B cell (primary cell): ENCODE measurements at regions of chr6 and their contacts with region 1.

Region 1: DNA sequence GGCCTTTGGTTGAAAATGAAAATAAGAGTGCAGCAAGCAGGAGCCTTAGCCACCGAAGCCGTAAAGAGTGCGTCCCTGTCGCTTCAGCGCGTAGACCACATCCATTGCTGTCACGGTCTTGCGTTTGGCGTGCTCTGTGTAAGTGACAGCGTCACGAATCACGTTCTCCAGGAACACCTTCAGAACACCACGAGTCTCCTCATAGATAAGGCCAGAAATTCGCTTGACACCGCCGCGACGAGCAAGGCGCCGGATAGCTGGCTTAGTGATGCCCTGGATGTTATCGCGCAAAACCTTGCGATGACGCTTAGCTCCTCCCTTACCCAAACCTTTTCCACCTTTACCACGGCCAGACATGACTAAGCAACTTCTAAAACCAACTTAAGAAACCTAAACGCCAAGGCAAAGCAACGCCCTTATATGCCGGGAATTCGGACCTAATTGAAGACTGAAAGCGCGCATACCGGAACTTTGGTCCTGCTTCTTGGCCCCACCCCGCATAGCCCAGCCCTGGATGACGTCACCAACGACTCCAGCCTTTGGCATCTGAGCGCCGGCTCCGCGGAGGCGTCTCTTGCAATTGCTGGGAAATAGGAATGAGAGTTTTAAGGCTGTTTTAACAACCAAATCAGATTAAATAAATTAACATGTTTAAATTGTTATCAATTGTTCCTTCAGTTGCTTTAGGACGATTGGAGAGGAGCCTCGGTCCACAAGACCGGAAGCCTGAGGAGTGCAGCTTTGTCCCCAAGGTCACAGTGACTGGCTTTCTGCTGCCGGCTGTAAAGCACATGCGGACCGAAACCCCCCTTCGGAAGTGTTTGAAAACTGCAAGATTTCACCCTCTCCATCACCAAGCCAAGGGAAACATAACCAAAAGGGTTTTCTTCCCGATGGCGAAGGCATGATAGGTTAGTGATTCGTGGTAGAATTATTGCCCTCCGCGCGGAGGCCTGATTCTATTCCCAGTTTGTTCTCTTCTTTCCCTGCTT is 79.6 kb upstream of the BTN3A2 start:
- DNase-seq: peak; percentile 99
- ATAC-seq: peak; percentile 76
- H3K4me3 ChIP-seq: peak overlapping the region; percentile 52 to 99 (median 71)
- H3K4me3 Mint-ChIP-seq: peak overlapping the region; percentile 90
- H3K27ac ChIP-seq: peak overlapping the region; percentile 93 to 97
- H3K27ac Mint-ChIP-seq: peak overlapping the region; percentile 95
- H3K4me1 ChIP-seq: peaks cover 17 to 18% of the 10 kb centered on the region in 2 donors
- H3K4me1 Mint-ChIP-seq: peaks cover 33% of the 10 kb centered on the region
- H3K27me3 ChIP-seq: no peaks in the 10 kb centered on the region
- H3K27me3 Mint-ChIP-seq: peaks cover 3% of the 10 kb centered on the region
- CTCF ChIP-seq: no peak

Region 2: GRCh38 chr6:25942561-25943147 is 342.8 kb before region 1 on chr6:
- CTCF ChIA-PET with region 1: no interaction called
- POLR2A ChIA-PET with region 1: no interaction called
- intact Hi-C with region 1: no loop called
- DNase-seq: peak; percentile 65
- ATAC-seq: peak; percentile 47
- H3K4me3 ChIP-seq: no peak overlapping the region
- H3K4me3 Mint-ChIP-seq: no peak overlapping the region
- H3K27ac ChIP-seq: no peak overlapping the region
- H3K27ac Mint-ChIP-seq: no peak overlapping the region
- H3K4me1 ChIP-seq: no peaks in the 10 kb centered on the region
- H3K4me1 Mint-ChIP-seq: peaks cover 10% of the 10 kb centered on the region
- H3K27me3 ChIP-seq: no peaks in the 10 kb centered on the region
- H3K27me3 Mint-ChIP-seq: peaks cover 4% of the 10 kb centered on the region
- CTCF ChIP-seq: peak; percentile 70

Region 3: GRCh38 chr6:26204332-26205165 is 80.9 kb before region 1 on chr6:
- CTCF ChIA-PET with region 1: interaction called, 14 read pairs
- POLR2A ChIA-PET with region 1: interaction called, 47 read pairs
- intact Hi-C with region 1: loop called (anchors 1 kb)
- DNase-seq: peak; percentile 96
- ATAC-seq: peak; percentile 65
- H3K4me3 ChIP-seq: peak overlapping the region; percentile 76 to 94 (median 81)
- H3K4me3 Mint-ChIP-seq: no peak overlapping the region
- H3K27ac ChIP-seq: peak overlapping the region; percentile 88 to 96
- H3K27ac Mint-ChIP-seq: no peak overlapping the region
- H3K4me1 ChIP-seq: peaks cover 26 to 38% of the 10 kb centered on the region in 2 donors
- H3K4me1 Mint-ChIP-seq: peaks cover 30% of the 10 kb centered on the region
- H3K27me3 ChIP-seq: no peaks in the 10 kb centered on the region
- H3K27me3 Mint-ChIP-seq: no peaks in the 10 kb centered on the region
- CTCF ChIP-seq: no peak

Region 4: DNA sequence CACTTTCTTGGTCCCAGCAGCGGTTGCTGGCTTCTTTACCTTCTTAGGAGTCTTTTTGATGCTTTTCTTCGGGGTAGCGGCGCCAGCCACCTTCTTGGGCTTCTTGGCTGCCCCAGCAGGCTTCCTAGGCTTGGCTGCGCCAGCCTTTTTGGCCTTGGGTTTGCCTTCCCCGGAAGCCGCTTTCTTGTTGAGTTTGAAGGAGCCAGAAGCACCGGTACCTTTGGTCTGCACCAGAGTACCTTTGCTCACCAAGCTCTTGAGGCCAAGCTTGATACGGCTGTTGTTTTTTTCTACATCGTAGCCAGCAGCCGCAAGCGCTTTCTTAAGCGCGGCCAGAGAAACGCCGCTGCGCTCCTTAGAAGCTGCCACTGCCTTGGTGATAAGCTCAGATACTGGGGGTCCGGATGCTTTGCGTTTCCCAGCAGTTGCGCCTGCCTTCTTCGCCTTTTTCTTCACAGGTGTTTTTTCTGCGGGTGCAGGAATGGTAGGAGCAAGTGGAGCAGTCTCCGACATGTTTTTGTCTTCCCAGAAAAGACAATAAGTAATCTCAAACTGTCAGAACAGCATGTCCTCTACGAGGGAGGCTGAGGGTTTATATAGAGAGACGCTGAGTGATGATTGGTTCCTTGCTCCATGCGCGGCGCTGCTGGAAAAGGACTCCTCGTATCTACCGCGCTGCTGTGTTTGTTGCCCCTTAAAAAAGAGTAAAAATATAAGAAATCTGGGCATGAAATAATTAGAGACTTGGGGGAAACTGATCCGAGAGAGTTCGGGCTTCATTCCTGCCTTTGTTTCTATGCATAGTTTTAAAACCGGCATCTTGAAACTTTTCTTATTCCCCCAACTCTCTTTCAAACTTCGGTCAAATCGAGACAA is 50.8 kb before region 1 on chr6:
- CTCF ChIA-PET with region 1: no interaction called
- POLR2A ChIA-PET with region 1: interaction called, 17 read pairs
- intact Hi-C with region 1: no loop called
- DNase-seq: peak; percentile 87
- ATAC-seq: peak; percentile 76
- H3K4me3 ChIP-seq: peak overlapping the region; percentile 70 to 99 (median 85)
- H3K4me3 Mint-ChIP-seq: peak overlapping the region; percentile 93
- H3K27ac ChIP-seq: peak overlapping the region; percentile 86 to 90
- H3K27ac Mint-ChIP-seq: peak overlapping the region; percentile 95
- H3K4me1 ChIP-seq: peaks cover 13 to 21% of the 10 kb centered on the region in 2 donors
- H3K4me1 Mint-ChIP-seq: peaks cover 23% of the 10 kb centered on the region
- H3K27me3 ChIP-seq: no peaks in the 10 kb centered on the region
- H3K27me3 Mint-ChIP-seq: no peaks in the 10 kb centered on the region
- CTCF ChIP-seq: no peak

Region 5: GRCh38 chr6:26249957-26250697 is 35.3 kb before region 1 on chr6:
- CTCF ChIA-PET with region 1: interaction called, 6 read pairs
- POLR2A ChIA-PET with region 1: interaction called, 29 read pairs
- intact Hi-C with region 1: loop called (anchors 1 kb)
- DNase-seq: peak; percentile 88
- ATAC-seq: peak; percentile 67
- H3K4me3 ChIP-seq: peak overlapping the region; percentile 68 to 90 (median 83)
- H3K4me3 Mint-ChIP-seq: peak overlapping the region; percentile 97
- H3K27ac ChIP-seq: peak overlapping the region; percentile 73 to 74
- H3K27ac Mint-ChIP-seq: peak overlapping the region; percentile 97
- H3K4me1 ChIP-seq: peaks cover 8 to 16% of the 10 kb centered on the region in 2 donors
- H3K4me1 Mint-ChIP-seq: peaks cover 43% of the 10 kb centered on the region
- H3K27me3 ChIP-seq: no peaks in the 10 kb centered on the region
- H3K27me3 Mint-ChIP-seq: no peaks in the 10 kb centered on the region
- CTCF ChIP-seq: peak; percentile 70

Region 6: GRCh38 chr6:26312501-26313390 is 27.3 kb after region 1 on chr6:
- CTCF ChIA-PET with region 1: no interaction called
- POLR2A ChIA-PET with region 1: interaction called, 3 read pairs
- intact Hi-C with region 1: loop called (anchors 1 kb)
- DNase-seq: peak; percentile 90
- ATAC-seq: peak; percentile 75
- H3K4me3 ChIP-seq: peak overlapping the region; percentile 64 to 100 (median 77)
- H3K4me3 Mint-ChIP-seq: peak overlapping the region; percentile 93
- H3K27ac ChIP-seq: peak overlapping the region in 1 of 2 donors; percentile 56
- H3K27ac Mint-ChIP-seq: peak overlapping the region; percentile 92
- H3K4me1 ChIP-seq: peaks cover 15 to 23% of the 10 kb centered on the region in 2 donors
- H3K4me1 Mint-ChIP-seq: peaks cover 32% of the 10 kb centered on the region
- H3K27me3 ChIP-seq: no peaks in the 10 kb centered on the region
- H3K27me3 Mint-ChIP-seq: peaks cover 4% of the 10 kb centered on the region
- CTCF ChIP-seq: no peak

Region 7: DNA sequence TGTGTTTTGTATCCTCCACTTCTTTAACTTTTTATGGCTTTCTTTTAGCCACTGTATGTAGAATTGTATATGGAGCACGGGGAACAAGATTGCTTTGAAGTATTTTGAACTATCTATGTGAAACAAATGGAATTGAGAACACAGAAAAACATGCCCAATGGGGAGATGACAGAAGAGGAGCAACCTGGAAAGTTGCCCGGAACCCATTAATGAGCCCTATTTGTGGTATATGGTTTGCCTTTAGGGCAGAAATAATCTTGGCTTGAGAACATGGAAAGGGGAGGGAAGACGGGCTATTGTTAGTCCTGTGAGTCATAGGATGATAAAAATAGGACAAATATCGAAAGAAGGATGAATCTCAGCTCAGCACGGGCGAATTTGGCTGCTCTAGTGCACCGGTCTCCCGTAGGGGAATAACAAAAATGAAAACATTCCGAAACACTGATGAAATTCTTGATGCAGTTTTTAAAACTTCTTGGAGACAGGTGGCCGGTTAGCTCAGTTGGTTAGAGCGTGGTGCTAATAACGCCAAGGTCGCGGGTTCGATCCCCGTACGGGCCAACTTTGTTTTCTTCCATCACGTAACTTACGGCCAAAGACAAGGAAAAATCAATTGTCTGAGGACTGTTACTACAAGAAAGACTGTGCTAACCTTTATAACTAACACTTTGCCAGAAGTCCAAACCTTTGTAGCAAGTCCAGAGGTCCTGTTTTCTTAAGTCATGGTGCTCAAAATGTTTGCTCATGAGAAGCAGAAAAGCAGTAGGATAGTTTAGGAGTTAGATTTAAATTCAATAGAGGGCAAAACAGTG is 268.4 kb after region 1 on chr6:
- CTCF ChIA-PET with region 1: no interaction called
- POLR2A ChIA-PET with region 1: interaction called, 6 read pairs
- intact Hi-C with region 1: loop called (anchors 1 kb)
- DNase-seq: peak; percentile 92
- ATAC-seq: peak; percentile 42
- H3K4me3 ChIP-seq: peak overlapping the region; percentile 59 to 90 (median 74)
- H3K4me3 Mint-ChIP-seq: no peak overlapping the region
- H3K27ac ChIP-seq: peak overlapping the region; percentile 26 to 62
- H3K27ac Mint-ChIP-seq: no peak overlapping the region
- H3K4me1 ChIP-seq: peaks cover 15 to 45% of the 10 kb centered on the region in 2 donors
- H3K4me1 Mint-ChIP-seq: peaks cover 22% of the 10 kb centered on the region
- H3K27me3 ChIP-seq: no peaks in the 10 kb centered on the region
- H3K27me3 Mint-ChIP-seq: no peaks in the 10 kb centered on the region
- CTCF ChIP-seq: no peak

Region 8: GRCh38 chr6:27838058-27838944 is 1552.9 kb after region 1 on chr6:
- CTCF ChIA-PET with region 1: no interaction called
- POLR2A ChIA-PET with region 1: no interaction called
- intact Hi-C with region 1: loop called (anchors 10 kb)
- DNase-seq: peak; percentile 98
- ATAC-seq: peak; percentile 80
- H3K4me3 ChIP-seq: peak overlapping the region; percentile 82 to 99 (median 90)
- H3K4me3 Mint-ChIP-seq: no peak overlapping the region
- H3K27ac ChIP-seq: peak overlapping the region; percentile 94 to 96
- H3K27ac Mint-ChIP-seq: no peak overlapping the region
- H3K4me1 ChIP-seq: peaks cover 28 to 29% of the 10 kb centered on the region in 2 donors
- H3K4me1 Mint-ChIP-seq: peaks cover 18% of the 10 kb centered on the region
- H3K27me3 ChIP-seq: peaks cover 0 to 4% (median 0%) of the 10 kb centered on the region in 4 experiments
- H3K27me3 Mint-ChIP-seq: no peaks in the 10 kb centered on the region
- CTCF ChIP-seq: no peak